ENCODE measurements at regions of chrX and their contacts with region 1.

Region 1: DNA sequence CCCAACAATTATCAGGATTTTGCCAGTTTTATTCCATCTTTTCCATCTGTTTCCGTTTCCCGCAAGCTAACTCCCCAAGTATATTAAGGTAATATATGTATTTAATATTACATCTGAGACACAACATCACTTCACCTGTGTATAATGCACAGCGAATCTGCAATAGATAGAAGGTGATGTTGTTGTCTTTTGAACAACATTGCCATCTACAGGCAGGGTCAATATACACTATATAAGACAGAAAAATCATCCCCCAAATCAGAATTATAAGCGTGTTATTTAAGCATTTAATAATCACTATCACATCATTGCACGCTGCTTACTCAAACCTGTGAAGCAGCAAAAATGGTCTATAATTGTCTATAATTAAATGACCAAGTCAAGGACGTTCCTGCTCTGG is 1115.5 kb downstream of the NLGN4X start:
- DNase-seq: no peak
- ATAC-seq: no peak

Region 2: DNA sequence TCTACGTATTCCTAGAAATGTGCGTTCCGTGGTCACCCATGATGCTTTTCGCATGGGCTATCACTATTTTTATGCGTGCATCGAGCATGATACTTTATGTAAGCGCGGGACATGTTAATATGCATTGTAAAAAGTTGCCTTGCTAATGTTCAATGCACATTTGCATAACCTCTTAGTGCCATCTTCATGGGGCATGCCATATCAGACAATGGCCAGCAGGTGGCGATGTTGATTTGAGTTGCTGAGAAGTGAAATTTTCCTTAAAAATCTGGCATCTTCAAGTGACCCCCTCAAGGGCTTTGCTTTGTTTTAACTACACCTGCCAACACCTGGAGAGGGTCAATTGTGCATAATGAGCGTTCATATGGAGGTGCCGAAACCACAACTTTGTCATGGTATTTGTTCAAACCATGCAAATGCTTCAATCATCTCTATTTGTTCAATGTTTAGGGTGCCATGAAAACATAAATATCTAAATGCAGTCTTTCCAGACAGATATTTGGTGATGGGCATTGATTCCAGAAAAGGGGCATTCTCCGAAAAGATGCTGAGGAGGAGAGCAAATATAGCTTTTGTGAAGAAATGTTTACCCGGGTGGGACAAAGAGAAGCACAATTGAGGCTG is 565.8 kb before region 1 on chrX:
- intact Hi-C with region 1: loop called (anchors 10 kb)
- DNase-seq: peak; percentile 25
- ATAC-seq: no peak

Region 3: DNA sequence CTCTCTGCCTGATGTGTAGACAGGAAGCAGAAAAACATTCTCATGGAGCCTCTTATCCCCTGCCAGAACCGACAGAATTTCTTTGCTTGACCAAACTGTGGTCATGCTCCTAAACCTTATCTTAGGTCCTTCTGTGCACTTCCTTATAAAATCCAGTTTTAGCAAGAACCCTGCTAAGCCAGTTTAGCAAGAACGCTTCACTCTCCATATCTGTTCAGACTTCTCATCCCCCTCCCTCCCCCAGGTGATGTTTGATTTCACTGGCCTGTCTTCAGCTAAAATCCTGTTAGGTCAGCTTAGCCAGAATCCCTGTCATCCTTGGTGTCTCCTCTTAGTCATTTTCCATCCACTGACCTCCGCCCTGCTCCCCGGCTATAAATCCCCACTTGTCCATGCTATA is 268.7 kb before region 1 on chrX:
- intact Hi-C with region 1: no loop called
- DNase-seq: no peak
- ATAC-seq: no peak

Region 4: GRCh38 chrX:4971646-4972045 is 141.5 kb before region 1 on chrX:
- intact Hi-C with region 1: no loop called
- DNase-seq: no peak
- ATAC-seq: no peak

Region 5: DNA sequence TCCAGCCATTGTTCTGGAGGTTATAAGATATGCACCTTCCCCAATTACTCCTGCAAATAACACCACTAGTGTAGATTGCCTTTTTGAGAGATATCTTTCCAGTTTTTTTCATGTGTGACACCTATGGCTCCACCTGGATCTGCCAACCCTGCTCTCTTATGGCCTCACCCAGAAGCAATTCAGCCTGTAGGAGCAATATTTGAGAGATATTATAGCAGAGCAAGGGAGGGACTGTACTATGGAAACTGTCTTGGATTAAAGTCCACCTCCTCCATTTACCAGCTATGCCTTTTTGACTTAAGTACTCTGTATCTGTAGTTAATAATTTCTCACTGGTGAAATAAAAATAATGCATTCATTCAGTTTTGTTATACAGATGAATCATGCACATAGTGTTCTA is 312.0 kb after region 1 on chrX:
- intact Hi-C with region 1: no loop called
- DNase-seq: no peak
- ATAC-seq: no peak

Measured in left ventricle myocardium superior (tissue), 1 donor.